Activated B cell treated with CpG ODN at 0.5 μM for 24 hours (primary cell): ENCODE measurements at regions of chr1 and their contacts with region 1.

Region 1: DNA sequence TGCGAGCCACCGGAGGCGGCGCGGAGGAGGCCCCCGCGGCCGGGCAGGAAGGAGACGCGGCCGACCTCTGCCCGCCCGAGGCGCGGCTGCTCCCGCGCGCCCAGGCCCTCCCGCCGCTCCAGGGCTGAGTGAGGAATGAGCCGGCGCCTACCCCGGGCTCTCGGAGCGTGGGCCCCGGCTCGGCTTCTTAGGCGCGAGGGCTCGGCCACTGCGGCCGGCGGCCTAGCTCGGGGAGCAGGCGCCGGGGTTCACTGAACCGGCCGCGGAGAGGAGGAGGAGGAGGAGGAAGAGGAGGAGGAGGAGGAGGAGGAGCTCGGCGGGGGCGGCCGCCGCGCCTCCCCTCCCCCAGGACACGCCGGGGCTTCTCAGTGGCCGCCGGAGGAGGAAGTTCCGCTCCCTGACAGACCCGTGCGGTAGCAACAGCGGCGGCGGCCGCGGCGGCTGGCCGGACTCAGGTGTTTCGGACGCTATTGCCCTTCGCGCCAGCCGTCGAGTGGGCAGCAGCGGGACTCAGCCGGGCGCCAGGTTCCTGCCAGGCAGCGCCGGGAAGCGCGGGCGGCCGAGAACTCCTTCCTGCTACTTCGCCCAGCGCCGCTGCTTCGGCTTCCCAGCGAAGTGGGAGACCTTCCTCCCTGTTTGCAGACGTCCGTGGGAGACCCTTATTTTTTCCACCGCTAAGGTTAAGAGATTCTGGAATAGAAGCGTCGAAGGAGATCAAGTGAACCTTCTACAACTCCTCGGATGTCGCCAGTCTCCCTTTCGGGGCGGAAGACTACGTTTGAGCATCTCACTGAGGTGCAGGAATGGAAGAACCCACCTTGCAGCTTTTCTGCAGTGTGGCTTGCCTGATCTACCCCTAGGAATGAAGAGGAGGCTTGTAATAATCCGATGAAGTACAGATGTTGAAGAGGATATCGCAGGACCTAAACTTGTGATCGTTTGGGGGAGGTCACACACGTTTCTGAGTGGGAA is at the start of gene MAN1A2:
- DNase-seq: peak; percentile 82
- ATAC-seq: peak; percentile 72
- H3K4me3 Mint-ChIP-seq: peak within 1 kb of the TSS; percentile 95
- H3K27ac Mint-ChIP-seq: peak within 1 kb of the TSS; percentile 91
- H3K4me1 Mint-ChIP-seq: peaks cover 68% of the 10 kb centered on the region
- H3K27me3 Mint-ChIP-seq: no peaks in the 10 kb centered on the region
- CTCF ChIP-seq: no peak
- total RNA-seq, gene MAN1A2: 43.3 and 46.0 TPM in 2 replicates

Region 2: GRCh38 chr1:116372587-116373444 is 994.5 kb before region 1 on chr1 and contains the start of gene ATP1A1:
- CTCF ChIA-PET with region 1: no interaction called
- POLR2A ChIA-PET with region 1: no interaction called
- intact Hi-C with region 1: loop called (anchors 10 kb)
- DNase-seq: peak; percentile 99
- ATAC-seq: peak; percentile 75
- H3K4me3 Mint-ChIP-seq: peak within 1 kb of the TSS; percentile 91
- H3K27ac Mint-ChIP-seq: peak within 1 kb of the TSS; percentile 94
- H3K4me1 Mint-ChIP-seq: peaks cover 38% of the 10 kb centered on the region
- H3K27me3 Mint-ChIP-seq: peaks cover 2% of the 10 kb centered on the region
- CTCF ChIP-seq: no peak
- total RNA-seq, gene ATP1A1: 139 and 151 TPM in 2 replicates

Region 3: DNA sequence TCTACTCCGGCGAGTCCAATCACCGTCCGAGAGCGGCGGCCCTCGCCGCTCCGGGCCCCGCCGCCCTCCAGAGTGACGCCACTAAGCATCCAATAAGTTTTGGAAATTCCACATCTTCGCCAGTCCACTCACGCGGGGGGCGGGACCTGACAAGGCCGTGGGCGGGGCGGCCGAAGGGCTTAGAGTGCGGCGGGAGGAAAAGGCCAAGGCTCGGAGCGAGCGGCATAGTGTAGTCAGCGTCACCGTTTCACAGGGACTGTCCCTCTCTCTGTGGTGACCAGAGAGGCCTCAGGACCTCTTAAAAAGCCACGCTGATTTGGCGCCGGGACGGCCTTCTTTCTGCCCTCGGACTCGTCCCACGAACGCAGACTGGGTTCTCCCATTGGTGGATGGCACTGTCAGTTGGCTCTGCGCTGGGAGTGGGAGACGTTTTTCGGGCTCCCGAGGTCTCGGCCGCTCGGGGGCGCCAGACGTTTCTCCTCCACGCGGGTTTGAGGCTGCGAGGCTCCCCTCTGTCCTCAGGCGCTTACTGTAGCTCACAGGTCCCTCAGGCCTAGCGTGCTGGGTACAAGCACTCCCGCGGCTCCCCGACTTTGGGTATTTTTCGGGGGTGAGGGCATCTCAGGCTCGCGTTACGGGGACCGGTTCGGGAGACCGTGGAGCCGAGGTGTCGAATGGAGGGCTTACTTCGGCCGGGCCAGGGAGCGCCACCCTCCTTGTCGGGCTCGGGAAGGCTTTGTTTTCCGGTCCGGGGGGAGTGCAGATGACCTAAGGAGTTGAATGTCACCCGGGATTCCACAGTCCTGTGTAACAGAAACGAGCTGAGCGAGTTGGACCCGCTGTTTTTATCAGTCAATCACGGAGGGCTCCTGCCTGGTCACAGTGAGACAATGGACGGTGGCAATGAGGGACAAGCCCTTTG is 245.3 kb before region 1 on chr1:
- CTCF ChIA-PET with region 1: no interaction called
- POLR2A ChIA-PET with region 1: no interaction called
- intact Hi-C with region 1: loop called (anchors 2 kb)
- DNase-seq: peak; percentile 76
- ATAC-seq: peak; percentile 88
- H3K4me3 Mint-ChIP-seq: peak overlapping the region; percentile 88
- H3K27ac Mint-ChIP-seq: peak overlapping the region; percentile 54
- H3K4me1 Mint-ChIP-seq: peaks cover 13% of the 10 kb centered on the region
- H3K27me3 Mint-ChIP-seq: peaks cover 2% of the 10 kb centered on the region
- CTCF ChIP-seq: no peak

Region 4: GRCh38 chr1:117388328-117388727 is 21.0 kb after region 1 on chr1:
- CTCF ChIA-PET with region 1: no interaction called
- POLR2A ChIA-PET with region 1: interaction called, 3 read pairs
- intact Hi-C with region 1: loop called (anchors 2 kb)
- DNase-seq: no peak
- ATAC-seq: peak; percentile 14
- H3K4me3 Mint-ChIP-seq: no peak overlapping the region
- H3K27ac Mint-ChIP-seq: peak overlapping the region; percentile 46
- H3K4me1 Mint-ChIP-seq: peaks cover 64% of the 10 kb centered on the region
- H3K27me3 Mint-ChIP-seq: no peaks in the 10 kb centered on the region
- CTCF ChIP-seq: no peak

Region 5: DNA sequence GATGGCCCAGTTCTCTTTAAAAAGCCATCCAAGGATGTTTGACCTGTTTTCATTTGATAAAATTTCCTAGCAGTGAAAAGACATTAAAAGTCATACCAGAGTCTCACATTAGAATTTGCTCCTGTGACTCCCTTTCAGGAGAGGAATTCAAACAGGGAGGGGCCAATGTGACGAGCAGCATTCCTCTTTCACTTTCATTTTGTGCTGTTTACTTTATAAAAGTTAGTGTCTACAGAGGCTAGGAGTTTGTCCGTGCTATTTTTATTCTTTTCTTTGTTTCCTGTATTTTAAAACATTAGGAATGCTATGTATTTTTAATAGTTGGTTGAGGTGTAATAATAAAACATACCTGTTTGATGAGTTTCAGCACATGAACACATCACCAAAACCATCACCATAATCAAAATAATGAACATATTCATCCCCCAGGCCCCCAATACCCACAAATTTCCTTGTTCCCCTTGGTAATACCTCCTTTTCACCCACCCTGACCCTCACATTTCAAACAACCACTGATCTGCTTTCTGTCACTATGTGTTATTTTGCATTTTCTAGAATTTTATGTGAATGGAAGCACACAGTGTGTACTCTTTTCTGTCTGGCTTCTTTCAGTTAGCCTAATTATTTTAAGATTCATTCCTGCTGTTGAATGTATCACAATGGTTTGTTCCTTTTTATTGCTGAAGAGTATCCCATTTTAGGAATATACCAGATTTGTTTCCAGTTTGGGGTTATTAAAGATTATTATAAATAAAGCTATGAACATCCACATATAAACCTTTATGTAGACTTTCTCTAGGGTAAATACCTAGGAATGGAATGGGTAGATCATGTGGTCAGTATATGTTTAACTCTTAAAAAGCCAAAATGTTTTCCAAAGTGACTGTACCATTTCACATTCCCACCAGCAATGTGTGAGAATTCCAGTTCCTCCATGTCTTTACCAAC is 368.0 kb after region 1 on chr1:
- CTCF ChIA-PET with region 1: no interaction called
- POLR2A ChIA-PET with region 1: no interaction called
- intact Hi-C with region 1: loop called (anchors 5 kb)
- DNase-seq: no peak
- ATAC-seq: peak; percentile 49
- H3K4me3 Mint-ChIP-seq: peak overlapping the region; percentile 72
- H3K27ac Mint-ChIP-seq: peak overlapping the region; percentile 55
- H3K4me1 Mint-ChIP-seq: peaks cover 10% of the 10 kb centered on the region
- H3K27me3 Mint-ChIP-seq: no peaks in the 10 kb centered on the region
- CTCF ChIP-seq: no peak

Region 6: DNA sequence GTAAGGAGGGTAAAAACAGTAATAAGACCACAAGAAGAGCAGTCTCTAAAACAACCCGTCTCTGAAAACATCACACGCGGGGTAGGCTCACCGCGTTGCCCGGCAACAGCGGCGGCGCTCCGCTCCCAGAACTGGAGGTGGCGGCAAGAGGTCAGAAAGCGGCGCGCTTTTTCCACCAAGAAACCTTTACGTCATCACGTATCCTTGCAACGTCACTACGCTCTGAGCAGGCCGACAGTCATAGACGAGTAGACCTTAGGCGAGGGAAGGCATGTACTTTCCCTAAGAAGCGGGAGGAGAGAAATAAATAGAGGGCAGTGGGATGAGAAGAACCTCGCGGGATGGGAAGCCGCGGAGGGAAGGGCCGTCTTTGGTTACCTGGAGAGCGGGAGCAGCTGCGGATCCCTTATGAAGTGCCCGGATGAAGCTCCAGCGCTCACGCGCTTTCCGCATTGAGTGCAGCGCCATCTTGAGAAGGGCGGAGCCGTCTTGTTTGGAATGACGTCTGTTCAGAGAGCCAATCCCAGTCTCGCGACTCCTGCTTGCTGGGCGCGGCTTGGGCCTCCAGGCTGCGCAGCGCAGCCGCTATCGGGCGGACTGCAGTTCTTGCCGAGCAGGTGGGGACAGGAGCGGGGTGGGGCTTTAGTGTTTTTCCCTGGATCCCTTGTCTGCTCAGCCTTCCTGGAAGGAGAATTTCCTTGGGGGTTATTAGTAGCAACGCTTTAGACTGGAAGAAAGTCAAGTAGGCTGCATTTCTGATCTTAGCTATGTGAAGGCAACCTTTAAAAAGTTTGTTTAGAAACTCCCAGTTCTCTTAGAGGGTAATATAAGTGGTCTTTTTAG is 1773.1 kb after region 1 on chr1 and contains the start of gene WARS2:
- CTCF ChIA-PET with region 1: no interaction called
- POLR2A ChIA-PET with region 1: interaction called, 4 read pairs
- intact Hi-C with region 1: loop called (anchors 5 kb)
- DNase-seq: peak; percentile 83
- ATAC-seq: peak; percentile 93
- H3K4me3 Mint-ChIP-seq: no peak within 1 kb of the TSS
- H3K27ac Mint-ChIP-seq: no peak within 1 kb of the TSS
- H3K4me1 Mint-ChIP-seq: peaks cover 4% of the 10 kb centered on the region
- H3K27me3 Mint-ChIP-seq: no peaks in the 10 kb centered on the region
- CTCF ChIP-seq: no peak
- total RNA-seq, gene WARS2: 15.1 and 15.2 TPM in 2 replicates